Heart left ventricle (tissue), 16 donors: ENCODE measurements at regions of chr7 and their contacts with region 1.

Region 1: GRCh38 chr7:50711257-50712175 is 71.2 kb downstream of the GRB10 start:
- DNase-seq: peak in 3 of 5 donors; percentile 42 to 62 (median 56)
- ATAC-seq: peak in 3 of 4 donors; percentile 24 to 38 (median 25)
- H3K4me3 ChIP-seq: no peak overlapping the region
- H3K27ac ChIP-seq: peak overlapping the region in 3 of 12 donors; percentile 18 to 61 (median 32)
- H3K4me1 ChIP-seq: peaks cover 0 to 83% (median 60%) of the 10 kb centered on the region in 12 donors
- H3K27me3 ChIP-seq: no peaks in the 10 kb centered on the region
- CTCF ChIP-seq: no peak
- POLR2A ChIP-seq: no peak

Region 2: DNA sequence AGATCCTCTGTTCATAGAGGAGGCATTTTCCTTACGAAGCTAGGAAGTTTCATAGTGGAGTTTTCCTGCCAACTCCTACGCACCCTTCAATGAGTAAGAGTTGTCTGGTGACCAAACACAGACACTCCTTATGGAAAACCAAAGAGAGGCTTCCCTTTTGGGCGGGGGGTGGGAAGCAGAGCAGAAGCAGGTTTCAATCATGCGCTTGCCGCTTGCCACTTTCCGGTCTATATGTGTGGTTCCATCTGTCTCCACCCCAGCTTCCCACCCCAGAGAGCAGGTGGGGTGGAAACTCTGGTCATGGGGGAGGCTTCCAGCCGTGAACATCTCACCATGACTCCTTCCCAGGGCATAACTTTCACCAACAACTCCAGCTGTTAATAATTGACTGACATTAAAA is 139.9 kb after region 1 on chr7:
- intact Hi-C with region 1: loop called in 1 of 10 experiments (anchors 10 kb)
- DNase-seq: peak in 1 of 5 donors; percentile 41
- ATAC-seq: peak in 3 of 4 donors; percentile 59 to 88 (median 83)
- H3K4me3 ChIP-seq: no peak overlapping the region
- H3K27ac ChIP-seq: peak overlapping the region in 1 of 12 donors; percentile 33
- H3K4me1 ChIP-seq: peaks cover 0 to 13% (median 4%) of the 10 kb centered on the region in 12 donors
- H3K27me3 ChIP-seq: no peaks in the 10 kb centered on the region
- CTCF ChIP-seq: no peak
- POLR2A ChIP-seq: no peak